ENCODE measurements at regions of chr10 and their contacts with region 1.

Region 1: GRCh38 chr10:17062955-17063484 is 66.6 kb downstream of the CUBN start:
- DNase-seq: peak; percentile 86
- ATAC-seq: peak; percentile 95
- H3K4me3 ChIP-seq: peak overlapping the region; percentile 18 to 42
- H3K27ac ChIP-seq: peak overlapping the region; percentile 4; the same call in 1 of the 2 replicates
- H3K4me1 ChIP-seq: peaks cover 37 to 48% of the 10 kb centered on the region in 2 experiments
- H3K27me3 ChIP-seq: no peaks in the 10 kb centered on the region
- CTCF ChIP-seq: no peak
- POLR2A ChIP-seq: no peak
- RAD21 ChIP-seq: peak; percentile 22

Region 2: GRCh38 chr10:17652585-17652984 is 589.6 kb after region 1 on chr10:
- CTCF ChIA-PET with region 1: no interaction called
- POLR2A ChIA-PET with region 1: no interaction called
- RAD21 ChIA-PET with region 1: no interaction called
- intact Hi-C with region 1: loop called (anchors 5 kb)
- DNase-seq: no peak
- ATAC-seq: no peak
- H3K4me3 ChIP-seq: no peak overlapping the region
- H3K27ac ChIP-seq: no peak overlapping the region
- H3K4me1 ChIP-seq: peaks cover 50 to 76% of the 10 kb centered on the region in 2 experiments
- H3K27me3 ChIP-seq: no peaks in the 10 kb centered on the region
- CTCF ChIP-seq: no peak
- POLR2A ChIP-seq: no peak
- RAD21 ChIP-seq: no peak

Measured in HCT116 (cell line).